CD4-positive, alpha-beta T cell (primary cell): ENCODE measurements at regions of chr9 and their contacts with region 1.

Region 1: DNA sequence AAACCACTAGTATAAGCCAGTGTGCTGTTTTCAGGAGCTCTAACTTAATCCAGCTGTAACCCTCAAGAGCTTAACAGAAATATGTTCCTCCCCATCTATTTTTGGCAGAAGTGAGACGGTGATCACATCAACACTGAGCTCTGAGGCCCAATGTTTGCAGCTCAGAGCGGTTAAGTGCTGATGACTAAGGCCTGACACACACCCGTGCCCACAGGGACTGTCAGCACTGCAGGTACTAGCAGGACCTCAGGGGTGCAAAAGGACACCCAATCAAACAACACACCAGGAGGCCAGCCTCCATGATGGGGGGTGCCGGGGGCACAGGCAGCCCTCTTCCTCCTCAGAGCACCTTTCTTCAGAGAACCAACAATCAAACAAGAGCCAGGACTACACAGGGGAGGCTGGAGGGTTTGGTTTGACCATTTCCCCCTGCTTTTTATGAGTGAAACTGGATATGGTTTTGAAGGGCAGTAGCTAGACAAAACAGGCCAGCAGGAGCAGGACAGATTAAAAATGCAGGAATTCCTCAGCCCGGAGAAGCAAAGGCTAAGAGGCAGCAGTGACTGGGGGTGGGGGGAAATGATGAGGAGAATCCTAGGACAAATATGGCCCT is 61.3 kb downstream of the RAPGEF1 start:
- DNase-seq: peak; percentile 47 to 90 (median 74)
- ATAC-seq: peak; percentile 89
- H3K4me3 ChIP-seq: no peak overlapping the region
- H3K4me3 Mint-ChIP-seq: peak overlapping the region; percentile 28
- H3K27ac ChIP-seq: peak overlapping the region; percentile 74 to 76
- H3K27ac Mint-ChIP-seq: peak overlapping the region; percentile 96
- H3K4me1 ChIP-seq: peaks cover 67% of the 10 kb centered on the region
- H3K4me1 Mint-ChIP-seq: peaks cover 93% of the 10 kb centered on the region
- H3K27me3 ChIP-seq: no peaks in the 10 kb centered on the region
- H3K27me3 Mint-ChIP-seq: no peaks in the 10 kb centered on the region
- CTCF ChIP-seq: no peak

Region 2: DNA sequence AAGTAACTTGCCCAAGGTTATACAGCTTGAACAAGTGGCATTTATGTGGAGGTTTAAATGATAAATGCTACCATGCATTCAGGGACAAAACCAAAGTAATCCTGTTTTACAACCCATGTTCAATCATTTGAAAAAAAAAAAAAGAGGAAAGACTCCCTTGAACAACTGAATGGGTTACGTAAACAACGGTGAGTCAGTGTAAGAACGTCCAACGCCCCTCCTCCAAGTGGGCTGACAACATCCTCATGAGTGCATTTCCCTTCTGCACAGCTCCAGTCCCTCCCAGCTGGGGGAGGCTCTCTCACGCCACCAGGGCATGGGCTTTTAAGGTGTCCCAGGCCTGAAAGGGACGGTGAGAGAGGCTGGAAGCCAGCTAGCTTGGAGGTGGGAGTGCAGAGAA is 43.3 kb before region 1 on chr9:
- CTCF ChIA-PET with region 1: interaction called, 4 read pairs
- POLR2A ChIA-PET with region 1: interaction called, 10 read pairs
- intact Hi-C with region 1: loop called in 1 of 2 experiments (anchors 2 kb)
- DNase-seq: peak; percentile 46 to 94 (median 74)
- ATAC-seq: peak; percentile 99
- H3K4me3 ChIP-seq: no peak overlapping the region
- H3K4me3 Mint-ChIP-seq: peak overlapping the region; percentile 54
- H3K27ac ChIP-seq: peak overlapping the region; percentile 62 to 81
- H3K27ac Mint-ChIP-seq: peak overlapping the region; percentile 98
- H3K4me1 ChIP-seq: peaks cover 20% of the 10 kb centered on the region
- H3K4me1 Mint-ChIP-seq: peaks cover 46% of the 10 kb centered on the region
- H3K27me3 ChIP-seq: no peaks in the 10 kb centered on the region
- H3K27me3 Mint-ChIP-seq: no peaks in the 10 kb centered on the region
- CTCF ChIP-seq: peak; percentile 13

Region 3: GRCh38 chr9:131649646-131650045 is 29.0 kb before region 1 on chr9:
- CTCF ChIA-PET with region 1: no interaction called
- POLR2A ChIA-PET with region 1: no interaction called
- intact Hi-C with region 1: no loop called
- DNase-seq: no peak
- ATAC-seq: no peak
- H3K4me3 ChIP-seq: no peak overlapping the region
- H3K4me3 Mint-ChIP-seq: no peak overlapping the region
- H3K27ac ChIP-seq: peak overlapping the region in 1 of 2 donors; percentile 15
- H3K27ac Mint-ChIP-seq: no peak overlapping the region
- H3K4me1 ChIP-seq: peaks cover 28% of the 10 kb centered on the region
- H3K4me1 Mint-ChIP-seq: peaks cover 32% of the 10 kb centered on the region
- H3K27me3 ChIP-seq: no peaks in the 10 kb centered on the region
- H3K27me3 Mint-ChIP-seq: no peaks in the 10 kb centered on the region
- CTCF ChIP-seq: no peak

Region 4: GRCh38 chr9:131661568-131662288 is 16.9 kb before region 1 on chr9:
- CTCF ChIA-PET with region 1: no interaction called
- POLR2A ChIA-PET with region 1: interaction called, 58 read pairs
- intact Hi-C with region 1: loop called in 1 of 2 experiments (anchors 2 kb)
- DNase-seq: peak; percentile 43 to 82 (median 65)
- ATAC-seq: peak; percentile 87
- H3K4me3 ChIP-seq: no peak overlapping the region
- H3K4me3 Mint-ChIP-seq: peak overlapping the region; percentile 47
- H3K27ac ChIP-seq: peak overlapping the region in 1 of 2 donors; percentile 4
- H3K27ac Mint-ChIP-seq: peak overlapping the region; percentile 96
- H3K4me1 ChIP-seq: peaks cover 70% of the 10 kb centered on the region
- H3K4me1 Mint-ChIP-seq: peaks cover 81% of the 10 kb centered on the region
- H3K27me3 ChIP-seq: no peaks in the 10 kb centered on the region
- H3K27me3 Mint-ChIP-seq: no peaks in the 10 kb centered on the region
- CTCF ChIP-seq: no peak

Region 5: DNA sequence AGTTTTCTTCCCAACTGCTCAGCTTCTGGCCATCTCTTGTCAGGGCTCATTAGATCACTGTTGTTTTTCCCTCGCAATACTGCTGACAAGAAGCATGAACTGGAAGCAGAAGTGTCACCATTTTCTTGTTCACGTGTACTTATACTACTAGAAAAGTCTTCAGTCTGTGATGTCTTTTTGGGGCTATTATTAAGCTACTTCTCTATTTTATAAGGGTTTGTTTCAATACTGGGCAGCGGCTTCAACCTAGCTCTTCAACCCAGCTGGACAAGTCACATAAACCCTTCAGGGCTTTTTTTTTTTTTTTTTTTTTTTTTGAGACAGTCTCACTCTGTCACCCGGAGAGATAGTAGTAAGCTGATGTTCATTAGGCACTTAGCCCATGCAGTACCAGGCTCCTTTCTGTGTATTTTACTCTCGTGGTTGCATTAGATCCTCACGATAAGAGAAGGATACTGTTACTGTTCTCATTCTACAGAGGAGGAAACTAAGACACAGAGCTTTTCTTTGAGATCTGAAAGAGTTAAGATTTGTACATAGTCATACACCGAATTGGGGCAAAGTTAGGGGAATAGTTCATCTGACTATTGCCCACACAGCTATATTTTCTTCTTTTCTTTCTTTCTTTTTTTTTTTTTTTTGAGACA is 40.8 kb after region 1 on chr9:
- CTCF ChIA-PET with region 1: no interaction called
- POLR2A ChIA-PET with region 1: interaction called, 11 read pairs
- intact Hi-C with region 1: no loop called
- DNase-seq: peak in 1 of 14 experiments; percentile 33
- ATAC-seq: peak; percentile 50
- H3K4me3 ChIP-seq: no peak overlapping the region
- H3K4me3 Mint-ChIP-seq: peak overlapping the region; percentile 4
- H3K27ac ChIP-seq: no peak overlapping the region
- H3K27ac Mint-ChIP-seq: peak overlapping the region; percentile 85
- H3K4me1 ChIP-seq: peaks cover 62% of the 10 kb centered on the region
- H3K4me1 Mint-ChIP-seq: peaks cover 81% of the 10 kb centered on the region
- H3K27me3 ChIP-seq: no peaks in the 10 kb centered on the region
- H3K27me3 Mint-ChIP-seq: no peaks in the 10 kb centered on the region
- CTCF ChIP-seq: no peak

Region 6: DNA sequence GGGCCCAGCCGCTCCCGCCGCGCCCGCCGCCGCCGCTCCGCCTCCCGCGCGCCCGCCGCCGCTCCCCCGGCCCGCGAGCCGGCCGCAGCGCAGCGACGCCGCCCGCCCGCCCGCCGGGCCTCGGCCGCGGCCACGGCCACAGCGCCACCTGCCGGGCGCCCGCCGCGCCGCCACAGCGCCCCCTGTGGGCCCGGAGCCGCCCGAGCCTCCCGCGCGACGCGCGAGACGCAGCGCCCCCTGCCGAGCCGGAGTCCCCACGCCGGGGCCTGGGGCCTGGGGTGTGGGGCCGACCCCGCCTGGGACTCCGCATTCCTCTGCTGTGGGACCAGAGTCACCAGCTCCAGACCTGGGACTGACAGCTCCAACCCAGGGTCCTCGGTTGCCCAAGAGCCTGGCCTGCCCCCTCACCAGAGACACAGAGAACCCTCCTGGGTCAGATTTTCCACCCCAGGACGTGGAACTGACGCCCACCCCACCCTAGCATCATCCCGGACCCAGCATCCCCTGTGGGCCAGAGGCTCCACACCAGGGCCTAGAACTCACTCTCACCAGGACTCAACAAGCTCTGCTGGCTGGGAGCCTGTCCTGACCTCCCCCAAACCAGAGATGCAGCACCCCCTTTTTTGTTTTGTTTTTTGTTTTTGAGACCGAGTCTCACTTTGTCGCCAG is 61.5 kb after region 1 on chr9 and contains the start of gene RAPGEF1:
- CTCF ChIA-PET with region 1: interaction called, 8 read pairs
- POLR2A ChIA-PET with region 1: interaction called, 11 read pairs
- intact Hi-C with region 1: loop called in 1 of 2 experiments (anchors 5 kb)
- DNase-seq: peak; percentile 57 to 91 (median 84)
- ATAC-seq: peak; percentile 57
- H3K4me3 ChIP-seq: peak within 1 kb of the TSS; percentile 85
- H3K4me3 Mint-ChIP-seq: peak within 1 kb of the TSS; percentile 95
- H3K27ac ChIP-seq: peak within 1 kb of the TSS; percentile 24
- H3K27ac Mint-ChIP-seq: peak within 1 kb of the TSS; percentile 92
- H3K4me1 ChIP-seq: peaks cover 69% of the 10 kb centered on the region
- H3K4me1 Mint-ChIP-seq: peaks cover 62% of the 10 kb centered on the region
- H3K27me3 ChIP-seq: no peaks in the 10 kb centered on the region
- H3K27me3 Mint-ChIP-seq: no peaks in the 10 kb centered on the region
- CTCF ChIP-seq: peak; percentile 66
- total RNA-seq, gene RAPGEF1: 130 to 134 TPM

Region 7: GRCh38 chr9:132312873-132313272 is 634.3 kb after region 1 on chr9:
- CTCF ChIA-PET with region 1: no interaction called
- POLR2A ChIA-PET with region 1: no interaction called
- intact Hi-C with region 1: no loop called
- DNase-seq: no peak
- ATAC-seq: no peak
- H3K4me3 ChIP-seq: no peak overlapping the region
- H3K4me3 Mint-ChIP-seq: no peak overlapping the region
- H3K27ac ChIP-seq: no peak overlapping the region
- H3K27ac Mint-ChIP-seq: peak overlapping the region; percentile 16
- H3K4me1 ChIP-seq: peaks cover 3% of the 10 kb centered on the region
- H3K4me1 Mint-ChIP-seq: peaks cover 35% of the 10 kb centered on the region
- H3K27me3 ChIP-seq: no peaks in the 10 kb centered on the region
- H3K27me3 Mint-ChIP-seq: no peaks in the 10 kb centered on the region
- CTCF ChIP-seq: no peak